ENCODE measurements at regions of chr16 and their contacts with region 1.

Region 1: GRCh38 chr16:81314603-81315270 is at the start of gene GAN:
- DNase-seq: peak; percentile 97
- H3K4me3 Mint-ChIP-seq: peak within 1 kb of the TSS; percentile 97
- H3K27ac Mint-ChIP-seq: peak within 1 kb of the TSS; percentile 83
- H3K4me1 Mint-ChIP-seq: peaks cover 65% of the 10 kb centered on the region
- H3K27me3 Mint-ChIP-seq: no peaks in the 10 kb centered on the region
- total RNA-seq, gene GAN: 10.6 to 11.3 TPM

Region 2: GRCh38 chr16:80540516-80541272 is 774.0 kb before region 1 on chr16 and contains the start of gene DYNLRB2:
- CTCF ChIA-PET with region 1: no interaction called
- intact Hi-C with region 1: loop called (anchors 5 kb)
- DNase-seq: peak; percentile 94
- H3K4me3 Mint-ChIP-seq: peak within 1 kb of the TSS; percentile 95
- H3K27ac Mint-ChIP-seq: peak within 1 kb of the TSS; percentile 97
- H3K4me1 Mint-ChIP-seq: peaks cover 16% of the 10 kb centered on the region
- H3K27me3 Mint-ChIP-seq: no peaks in the 10 kb centered on the region
- total RNA-seq, gene DYNLRB2: not detected

Region 3: DNA sequence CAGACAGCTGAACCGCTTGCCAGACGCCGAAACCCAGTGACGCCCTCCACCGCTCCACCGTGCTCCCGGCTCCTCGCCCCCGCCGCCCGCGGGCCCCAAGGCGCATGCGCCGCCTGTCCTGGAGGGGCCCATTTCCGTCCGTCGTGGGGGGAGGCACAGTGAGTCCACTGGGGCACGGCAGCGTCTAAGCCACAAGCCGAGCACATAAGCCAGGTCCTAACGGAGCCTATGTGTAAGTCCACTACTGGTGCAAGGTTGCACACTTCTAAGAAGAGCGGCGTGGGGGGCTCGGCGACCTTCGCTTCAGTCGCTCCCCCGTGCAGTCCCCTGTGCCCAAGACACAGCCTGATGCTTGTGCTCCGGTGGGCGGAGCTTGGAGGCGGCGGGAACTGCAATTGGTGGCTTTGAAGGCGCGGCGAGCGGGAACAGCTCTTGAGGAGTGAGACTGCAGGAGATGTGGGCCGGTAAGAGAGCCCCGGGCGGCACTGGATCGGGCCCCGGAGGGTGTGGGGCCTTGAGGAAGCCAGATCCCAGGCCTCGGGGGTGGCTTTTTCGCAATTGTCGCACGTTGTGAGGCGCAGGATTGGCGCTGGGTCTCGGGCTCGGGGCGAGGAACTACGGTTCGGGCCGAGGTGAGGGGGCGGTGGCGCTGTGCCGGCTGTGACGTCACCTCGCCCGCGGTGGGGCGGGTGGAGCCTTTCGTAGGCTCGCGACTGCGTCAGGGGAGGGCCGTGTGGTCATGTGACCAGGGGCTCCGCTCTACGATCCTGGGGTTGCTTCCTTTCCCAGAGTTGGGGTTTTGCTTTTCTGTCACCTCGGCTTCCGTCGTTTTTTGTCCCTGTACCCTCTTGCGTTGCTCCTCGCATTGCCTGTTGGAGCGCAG is 307.7 kb before region 1 on chr16 and contains the starts of genes CENPN and CMC2:
- CTCF ChIA-PET with region 1: interaction called, 4 read pairs
- intact Hi-C with region 1: loop called (anchors 1 kb)
- DNase-seq: peak; percentile 98
- H3K4me3 Mint-ChIP-seq: peak within 1 kb of the TSS; percentile 95
- H3K27ac Mint-ChIP-seq: peak within 1 kb of the TSS; percentile 100
- H3K4me1 Mint-ChIP-seq: peaks cover 50% of the 10 kb centered on the region
- H3K27me3 Mint-ChIP-seq: no peaks in the 10 kb centered on the region
- total RNA-seq, gene CENPN: 65.1 to 75.0 TPM
- total RNA-seq, gene CMC2: 112 to 122 TPM

Region 4: GRCh38 chr16:81095953-81096717 is 218.6 kb before region 1 on chr16 and contains the start of gene GCSH:
- CTCF ChIA-PET with region 1: no interaction called
- intact Hi-C with region 1: loop called (anchors 1 kb)
- DNase-seq: peak; percentile 98
- H3K4me3 Mint-ChIP-seq: peak within 1 kb of the TSS; percentile 78
- H3K27ac Mint-ChIP-seq: peak within 1 kb of the TSS; percentile 51
- H3K4me1 Mint-ChIP-seq: peaks cover 17% of the 10 kb centered on the region
- H3K27me3 Mint-ChIP-seq: no peaks in the 10 kb centered on the region
- total RNA-seq, gene GCSH: 25.7 to 27.4 TPM

Region 5: GRCh38 chr16:81335669-81336068 is 20.9 kb after region 1 on chr16:
- CTCF ChIA-PET with region 1: interaction called, 3 read pairs
- intact Hi-C with region 1: loop called (anchors 1 kb)
- DNase-seq: peak; percentile 69
- H3K4me3 Mint-ChIP-seq: no peak overlapping the region
- H3K27ac Mint-ChIP-seq: peak overlapping the region; percentile 63
- H3K4me1 Mint-ChIP-seq: peaks cover 22% of the 10 kb centered on the region
- H3K27me3 Mint-ChIP-seq: no peaks in the 10 kb centered on the region

Region 6: GRCh38 chr16:81632392-81633146 is 317.8 kb after region 1 on chr16:
- CTCF ChIA-PET with region 1: no interaction called
- intact Hi-C with region 1: loop called (anchors 1 kb)
- DNase-seq: peak; percentile 95
- H3K4me3 Mint-ChIP-seq: peak overlapping the region; percentile 64
- H3K27ac Mint-ChIP-seq: peak overlapping the region; percentile 96
- H3K4me1 Mint-ChIP-seq: peaks cover 66% of the 10 kb centered on the region
- H3K27me3 Mint-ChIP-seq: no peaks in the 10 kb centered on the region

Measured in activated naive CD4-positive, alpha-beta T cell treated with anti-CD3 and anti-CD28 coated beads for 36 hours (primary cell).